Natural killer cell (primary cell): ENCODE measurements at regions of chr5 and their contacts with region 1.

Region 1: DNA sequence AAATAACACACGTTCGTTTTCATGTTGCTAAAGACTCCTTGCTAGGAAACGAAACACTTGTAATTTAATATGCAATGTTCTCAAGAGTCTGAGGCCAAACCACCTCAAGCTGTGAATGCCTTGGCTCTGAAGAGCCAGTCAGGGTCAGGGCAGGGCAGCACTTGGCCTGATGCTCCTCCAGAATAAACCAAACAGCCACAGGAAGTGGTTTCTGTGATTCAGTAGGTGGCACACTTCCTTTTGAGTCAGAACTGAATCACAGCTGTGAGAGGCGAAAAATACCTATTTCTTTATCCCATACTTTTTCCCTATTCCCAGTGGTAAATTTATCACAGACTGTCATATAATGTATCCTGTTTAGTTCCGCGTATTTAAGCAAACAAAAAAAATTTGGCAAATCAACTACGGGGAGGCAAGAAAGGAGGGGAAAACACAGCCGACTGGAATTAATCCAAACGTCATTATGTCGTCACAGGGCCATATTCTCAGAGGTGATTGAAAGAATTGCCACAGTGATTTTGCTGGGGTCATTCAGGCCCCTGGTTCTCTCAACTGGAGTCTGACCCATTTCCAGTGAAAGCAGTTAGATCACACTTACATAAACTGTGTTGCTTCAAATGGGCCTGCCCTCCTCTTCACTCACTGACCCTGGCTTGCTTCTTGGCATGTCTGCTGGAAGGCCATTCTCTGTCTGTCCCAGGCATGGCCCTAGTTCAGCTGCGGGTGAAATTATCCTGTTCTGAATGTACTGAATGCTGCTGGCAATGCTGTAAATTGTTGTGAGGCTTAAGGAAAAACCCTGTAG is 71.2 kb downstream of the ARRDC3 start:
- DNase-seq: peak; percentile 60 to 87
- ATAC-seq: peak; percentile 70 to 87 (median 82)
- H3K4me3 ChIP-seq: no peak overlapping the region
- H3K4me3 Mint-ChIP-seq: peak overlapping the region; percentile 82
- H3K27ac ChIP-seq: peak overlapping the region; percentile 77
- H3K27ac Mint-ChIP-seq: peak overlapping the region; percentile 79 to 88
- H3K4me1 ChIP-seq: peaks cover 50% of the 10 kb centered on the region
- H3K4me1 Mint-ChIP-seq: peaks cover 40 to 48% of the 10 kb centered on the region in 2 donors
- H3K27me3 ChIP-seq: no peaks in the 10 kb centered on the region
- H3K27me3 Mint-ChIP-seq: no peaks in the 10 kb centered on the region
- CTCF ChIP-seq: no peak

Region 2: GRCh38 chr5:91162534-91163381 is 149.1 kb before region 1 on chr5:
- intact Hi-C with region 1: loop called (anchors 1 kb)
- DNase-seq: peak; percentile 62 to 67
- ATAC-seq: peak; percentile 90 to 98 (median 95)
- H3K4me3 ChIP-seq: no peak overlapping the region
- H3K4me3 Mint-ChIP-seq: peak overlapping the region; percentile 33
- H3K27ac ChIP-seq: peak overlapping the region; percentile 67
- H3K27ac Mint-ChIP-seq: peak overlapping the region; percentile 79 to 91
- H3K4me1 ChIP-seq: peaks cover 20% of the 10 kb centered on the region
- H3K4me1 Mint-ChIP-seq: peaks cover 28% of the 10 kb centered on the region in 2 donors
- H3K27me3 ChIP-seq: no peaks in the 10 kb centered on the region
- H3K27me3 Mint-ChIP-seq: no peaks in the 10 kb centered on the region
- CTCF ChIP-seq: no peak

Region 3: GRCh38 chr5:91266184-91266705 is 45.7 kb before region 1 on chr5:
- intact Hi-C with region 1: loop called (anchors 5 kb)
- DNase-seq: peak in 1 of 2 donors; percentile 15
- ATAC-seq: peak in 2 of 3 donors; percentile 65 to 87
- H3K4me3 ChIP-seq: no peak overlapping the region
- H3K4me3 Mint-ChIP-seq: no peak overlapping the region
- H3K27ac ChIP-seq: no peak overlapping the region
- H3K27ac Mint-ChIP-seq: peak overlapping the region in 1 of 2 donors; percentile 60
- H3K4me1 ChIP-seq: peaks cover 8% of the 10 kb centered on the region
- H3K4me1 Mint-ChIP-seq: peaks cover 19 to 24% of the 10 kb centered on the region in 2 donors
- H3K27me3 ChIP-seq: no peaks in the 10 kb centered on the region
- H3K27me3 Mint-ChIP-seq: no peaks in the 10 kb centered on the region
- CTCF ChIP-seq: no peak

Region 4: GRCh38 chr5:91280362-91281269 is 31.3 kb before region 1 on chr5:
- intact Hi-C with region 1: loop called (anchors 1 kb)
- DNase-seq: peak; percentile 89 to 94
- ATAC-seq: peak; percentile 85 to 95 (median 92)
- H3K4me3 ChIP-seq: peak overlapping the region; percentile 57
- H3K4me3 Mint-ChIP-seq: peak overlapping the region; percentile 98
- H3K27ac ChIP-seq: peak overlapping the region; percentile 52
- H3K27ac Mint-ChIP-seq: peak overlapping the region; percentile 95
- H3K4me1 ChIP-seq: peaks cover 16% of the 10 kb centered on the region
- H3K4me1 Mint-ChIP-seq: peaks cover 20 to 25% of the 10 kb centered on the region in 2 donors
- H3K27me3 ChIP-seq: peaks cover 2% of the 10 kb centered on the region
- H3K27me3 Mint-ChIP-seq: peaks cover 0 to 7% of the 10 kb centered on the region in 2 donors
- CTCF ChIP-seq: no peak

Region 5: GRCh38 chr5:91332267-91333045 is 20.6 kb after region 1 on chr5:
- intact Hi-C with region 1: loop called (anchors 1 kb)
- DNase-seq: peak in 1 of 2 donors; percentile 15
- ATAC-seq: peak; percentile 71 to 94 (median 83)
- H3K4me3 ChIP-seq: no peak overlapping the region
- H3K4me3 Mint-ChIP-seq: peak overlapping the region; percentile 1
- H3K27ac ChIP-seq: no peak overlapping the region
- H3K27ac Mint-ChIP-seq: peak overlapping the region; percentile 41 to 59
- H3K4me1 ChIP-seq: peaks cover 4% of the 10 kb centered on the region
- H3K4me1 Mint-ChIP-seq: peaks cover 17 to 22% of the 10 kb centered on the region in 2 donors
- H3K27me3 ChIP-seq: no peaks in the 10 kb centered on the region
- H3K27me3 Mint-ChIP-seq: no peaks in the 10 kb centered on the region
- CTCF ChIP-seq: no peak

Region 6: GRCh38 chr5:91345461-91345860 is 33.6 kb after region 1 on chr5:
- intact Hi-C with region 1: no loop called
- DNase-seq: no peak
- ATAC-seq: no peak
- H3K4me3 ChIP-seq: no peak overlapping the region
- H3K4me3 Mint-ChIP-seq: no peak overlapping the region
- H3K27ac ChIP-seq: no peak overlapping the region
- H3K27ac Mint-ChIP-seq: no peak overlapping the region
- H3K4me1 ChIP-seq: no peaks in the 10 kb centered on the region
- H3K4me1 Mint-ChIP-seq: no peaks in the 10 kb centered on the region
- H3K27me3 ChIP-seq: no peaks in the 10 kb centered on the region
- H3K27me3 Mint-ChIP-seq: no peaks in the 10 kb centered on the region
- CTCF ChIP-seq: no peak

Region 7: DNA sequence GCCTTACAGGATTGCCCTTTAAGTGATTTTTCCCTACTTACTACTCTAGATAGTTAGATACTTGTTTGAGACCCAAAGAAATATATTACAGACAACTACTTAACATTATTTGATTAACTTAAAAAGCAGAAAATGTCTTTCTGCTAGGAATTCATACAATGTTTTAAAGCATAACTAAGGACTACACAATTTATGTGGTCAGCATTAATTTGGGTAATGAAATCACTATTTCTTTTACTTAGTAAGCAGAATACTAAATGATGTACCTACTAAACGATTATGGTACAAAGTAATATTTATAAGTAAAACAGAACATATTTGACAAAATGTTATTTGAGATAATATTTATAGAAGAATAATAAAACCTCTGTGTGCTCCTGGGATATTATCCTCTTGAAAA is 443.1 kb after region 1 on chr5:
- intact Hi-C with region 1: no loop called
- DNase-seq: no peak
- ATAC-seq: no peak
- H3K4me3 ChIP-seq: no peak overlapping the region
- H3K4me3 Mint-ChIP-seq: no peak overlapping the region
- H3K27ac ChIP-seq: no peak overlapping the region
- H3K27ac Mint-ChIP-seq: no peak overlapping the region
- H3K4me1 ChIP-seq: no peaks in the 10 kb centered on the region
- H3K4me1 Mint-ChIP-seq: no peaks in the 10 kb centered on the region
- H3K27me3 ChIP-seq: no peaks in the 10 kb centered on the region
- H3K27me3 Mint-ChIP-seq: no peaks in the 10 kb centered on the region
- CTCF ChIP-seq: no peak